B cell (primary cell): ENCODE measurements at regions of chr13 and their contacts with region 1.

Region 1: DNA sequence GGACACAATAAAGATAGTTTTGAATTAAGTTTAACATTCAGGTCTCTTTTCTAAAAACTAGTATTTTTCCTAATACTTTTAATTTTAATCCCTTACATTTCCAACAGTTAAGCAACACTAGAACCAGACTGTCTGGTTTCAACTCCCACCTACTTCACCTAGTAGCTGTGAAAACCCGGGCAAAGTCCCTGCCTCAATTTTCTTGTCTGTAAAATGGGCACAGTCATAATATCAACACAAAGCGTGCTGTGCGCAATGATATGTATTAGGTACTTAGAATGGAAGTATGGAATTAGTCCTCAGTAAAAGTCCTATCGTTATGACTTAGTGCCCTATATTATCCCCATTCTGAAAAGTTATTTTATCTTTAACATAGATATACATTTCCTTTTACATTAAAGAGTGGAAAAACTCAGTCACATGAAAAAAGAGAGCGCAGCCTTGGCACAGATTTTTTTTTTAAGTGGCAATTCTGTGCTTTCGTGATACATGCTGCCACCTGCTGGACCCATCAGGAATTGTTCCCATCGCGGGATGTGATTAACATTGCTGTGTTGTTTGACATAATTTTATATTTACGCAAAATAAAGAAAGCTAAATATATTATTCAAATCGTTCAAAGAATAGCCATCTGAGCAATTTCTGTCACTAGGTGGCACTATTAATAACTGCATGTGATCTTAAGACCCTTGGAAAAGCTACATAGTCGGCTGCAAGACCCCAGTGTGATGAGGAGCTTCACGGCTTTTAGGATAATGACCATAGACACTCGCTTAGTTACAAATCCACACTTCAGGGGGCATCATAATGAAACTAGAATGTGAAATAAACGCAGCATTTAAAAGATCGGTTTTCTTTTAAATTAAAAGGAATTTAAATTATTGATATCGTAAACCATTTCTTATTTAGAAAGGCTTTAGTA is 59.9 kb downstream of the LIG4 start:
- DNase-seq: peak; percentile 65
- ATAC-seq: peak; percentile 51
- H3K4me3 ChIP-seq: no peak overlapping the region
- H3K4me3 Mint-ChIP-seq: no peak overlapping the region
- H3K27ac ChIP-seq: no peak overlapping the region
- H3K27ac Mint-ChIP-seq: no peak overlapping the region
- H3K4me1 ChIP-seq: no peaks in the 10 kb centered on the region
- H3K4me1 Mint-ChIP-seq: no peaks in the 10 kb centered on the region
- H3K27me3 ChIP-seq: peaks cover 0 to 2% (median 0%) of the 10 kb centered on the region in 4 experiments
- H3K27me3 Mint-ChIP-seq: peaks cover 19% of the 10 kb centered on the region
- CTCF ChIP-seq: peak; percentile 98

Region 2: GRCh38 chr13:107211073-107211472 is 944.4 kb before region 1 on chr13:
- CTCF ChIA-PET with region 1: interaction called, 11 read pairs
- POLR2A ChIA-PET with region 1: no interaction called
- intact Hi-C with region 1: no loop called
- DNase-seq: peak; percentile 21
- ATAC-seq: peak; percentile 43
- H3K4me3 ChIP-seq: no peak overlapping the region
- H3K4me3 Mint-ChIP-seq: no peak overlapping the region
- H3K27ac ChIP-seq: no peak overlapping the region
- H3K27ac Mint-ChIP-seq: no peak overlapping the region
- H3K4me1 ChIP-seq: no peaks in the 10 kb centered on the region
- H3K4me1 Mint-ChIP-seq: no peaks in the 10 kb centered on the region
- H3K27me3 ChIP-seq: no peaks in the 10 kb centered on the region
- H3K27me3 Mint-ChIP-seq: no peaks in the 10 kb centered on the region
- CTCF ChIP-seq: peak; percentile 79

Region 3: GRCh38 chr13:108166078-108166477 is 10.6 kb after region 1 on chr13:
- CTCF ChIA-PET with region 1: interaction called, 12 read pairs
- POLR2A ChIA-PET with region 1: no interaction called
- intact Hi-C with region 1: no loop called
- DNase-seq: no peak
- ATAC-seq: no peak
- H3K4me3 ChIP-seq: no peak overlapping the region
- H3K4me3 Mint-ChIP-seq: no peak overlapping the region
- H3K27ac ChIP-seq: no peak overlapping the region
- H3K27ac Mint-ChIP-seq: no peak overlapping the region
- H3K4me1 ChIP-seq: no peaks in the 10 kb centered on the region
- H3K4me1 Mint-ChIP-seq: no peaks in the 10 kb centered on the region
- H3K27me3 ChIP-seq: peaks cover 0 to 5% (median 0%) of the 10 kb centered on the region in 4 experiments
- H3K27me3 Mint-ChIP-seq: peaks cover 31% of the 10 kb centered on the region
- CTCF ChIP-seq: no peak

Region 4: DNA sequence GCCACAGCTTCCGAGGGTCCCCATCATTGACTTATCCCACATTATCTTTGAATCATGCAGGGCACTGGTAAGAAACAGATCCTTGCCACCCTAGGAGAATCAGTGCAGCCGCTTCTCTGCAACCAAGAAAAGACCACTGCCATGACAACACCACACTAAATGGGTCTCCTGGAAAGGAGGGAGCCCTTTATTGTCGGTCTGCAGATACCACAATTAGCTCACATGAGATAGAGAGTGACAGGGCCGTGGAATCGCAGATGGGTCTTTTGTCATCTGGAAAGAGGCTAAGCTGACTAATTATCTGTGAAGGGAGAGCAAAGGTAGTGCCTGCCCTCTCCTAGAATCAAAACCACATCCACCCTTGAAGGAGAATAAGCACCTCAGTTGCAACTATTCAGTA is 295.7 kb after region 1 on chr13:
- CTCF ChIA-PET with region 1: no interaction called
- POLR2A ChIA-PET with region 1: no interaction called
- intact Hi-C with region 1: no loop called
- DNase-seq: no peak
- ATAC-seq: no peak
- H3K4me3 ChIP-seq: no peak overlapping the region
- H3K4me3 Mint-ChIP-seq: no peak overlapping the region
- H3K27ac ChIP-seq: no peak overlapping the region
- H3K27ac Mint-ChIP-seq: no peak overlapping the region
- H3K4me1 ChIP-seq: no peaks in the 10 kb centered on the region
- H3K4me1 Mint-ChIP-seq: no peaks in the 10 kb centered on the region
- H3K27me3 ChIP-seq: no peaks in the 10 kb centered on the region
- H3K27me3 Mint-ChIP-seq: no peaks in the 10 kb centered on the region
- CTCF ChIP-seq: no peak

Region 5: DNA sequence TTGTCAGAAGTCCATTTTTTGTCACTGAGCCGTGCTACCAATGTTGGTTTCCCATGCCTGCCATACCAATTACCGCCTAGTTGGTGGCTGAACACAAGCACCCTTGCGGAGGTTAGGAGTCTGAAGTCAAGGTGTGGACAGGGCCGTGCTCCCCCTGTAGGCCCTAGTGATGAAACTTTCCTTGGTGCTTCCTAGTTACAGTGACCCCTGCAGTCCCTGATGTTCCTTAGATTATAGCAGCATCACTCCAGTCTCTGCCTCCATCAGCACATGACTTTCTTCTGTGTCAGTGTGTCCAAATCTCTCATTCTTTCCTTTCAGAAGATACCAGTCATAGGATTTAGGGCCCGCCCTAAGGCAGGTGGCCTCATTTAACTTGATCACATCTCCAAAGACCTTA is 572.9 kb after region 1 on chr13:
- CTCF ChIA-PET with region 1: no interaction called
- POLR2A ChIA-PET with region 1: no interaction called
- intact Hi-C with region 1: no loop called
- DNase-seq: no peak
- ATAC-seq: no peak
- H3K4me3 ChIP-seq: no peak overlapping the region
- H3K4me3 Mint-ChIP-seq: no peak overlapping the region
- H3K27ac ChIP-seq: no peak overlapping the region
- H3K27ac Mint-ChIP-seq: no peak overlapping the region
- H3K4me1 ChIP-seq: no peaks in the 10 kb centered on the region
- H3K4me1 Mint-ChIP-seq: no peaks in the 10 kb centered on the region
- H3K27me3 ChIP-seq: no peaks in the 10 kb centered on the region
- H3K27me3 Mint-ChIP-seq: no peaks in the 10 kb centered on the region
- CTCF ChIP-seq: no peak